ENCODE measurements at regions of chr6 and their contacts with region 1.

Region 1: DNA sequence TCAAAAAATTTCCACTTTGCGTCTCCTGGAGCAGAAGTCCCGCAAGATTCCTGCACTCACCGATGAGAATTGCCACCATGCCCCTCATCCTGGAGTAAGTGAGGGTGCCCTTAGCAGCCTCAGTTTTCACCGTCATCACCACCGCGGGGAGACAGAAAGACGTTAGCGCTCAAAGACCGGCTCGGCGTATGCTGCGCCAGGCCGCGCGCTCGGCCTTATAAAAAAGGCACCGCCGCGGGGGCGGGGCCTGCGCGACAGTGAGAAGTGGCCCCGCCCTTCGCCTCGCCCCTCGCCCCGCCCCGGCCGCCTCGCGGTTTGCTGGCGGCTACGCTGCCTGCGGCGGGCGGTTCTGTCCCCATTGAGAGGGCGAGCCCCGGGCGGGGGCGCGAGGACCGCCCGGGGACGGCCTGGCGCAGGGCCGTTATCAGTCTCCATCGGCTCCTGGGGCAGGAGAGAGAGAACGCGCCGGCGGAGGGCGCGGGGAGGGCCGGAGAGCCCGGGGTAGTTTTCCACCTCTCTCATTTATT is 122.3 kb upstream of the SLC2A12 start:
- DNase-seq: peak; percentile 88 to 98
- H3K4me3 ChIP-seq: peak overlapping the region; percentile 89
- CTCF ChIP-seq: no peak
- POLR2A ChIP-seq: peak in 1 of 2 donors; percentile 78

Region 2: DNA sequence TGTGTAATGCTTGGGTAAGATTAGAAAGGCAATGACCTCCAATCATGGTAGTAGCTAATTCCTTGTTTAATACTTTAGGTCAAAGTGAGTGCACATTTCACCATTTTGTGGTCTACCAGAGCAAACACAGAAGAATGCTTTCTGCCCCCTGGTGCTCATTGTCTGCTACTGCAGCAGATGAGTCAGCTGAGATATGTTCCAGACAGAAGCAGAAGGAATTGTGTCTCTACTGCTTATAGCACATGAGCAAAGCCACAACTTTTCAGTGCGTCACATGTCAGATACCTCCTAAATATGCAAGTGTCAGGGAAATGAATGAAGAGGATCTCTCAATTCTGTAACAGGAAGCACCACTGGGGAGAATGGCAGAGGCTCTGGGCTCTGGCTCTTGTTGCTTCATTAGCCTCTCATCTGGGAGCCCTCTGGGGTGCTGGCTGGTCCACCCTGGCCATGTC is 466.3 kb after region 1 on chr6:
- intact Hi-C with region 1: loop called (anchors 10 kb)
- DNase-seq: peak; percentile 92 to 95
- H3K4me3 ChIP-seq: no peak overlapping the region
- CTCF ChIP-seq: peak in 1 of 3 donors; percentile 95
- POLR2A ChIP-seq: no peak

Region 3: GRCh38 chr6:134826889-134827737 is 652.4 kb after region 1 on chr6:
- intact Hi-C with region 1: loop called (anchors 5 kb)
- DNase-seq: peak; percentile 87 to 96
- H3K4me3 ChIP-seq: no peak overlapping the region
- CTCF ChIP-seq: no peak
- POLR2A ChIP-seq: no peak

Region 4: GRCh38 chr6:134882426-134883038 is 707.8 kb after region 1 on chr6:
- intact Hi-C with region 1: loop called (anchors 5 kb)
- DNase-seq: peak; percentile 74 to 91
- H3K4me3 ChIP-seq: no peak overlapping the region
- CTCF ChIP-seq: peak in 1 of 3 donors; percentile 95
- POLR2A ChIP-seq: no peak

Measured in lower leg skin (tissue), 4 donors.